Activated B cell treated with CpG ODN at 0.5 μM for 24 hours (primary cell): ENCODE measurements at regions of chr1 and their contacts with region 1.

Region 1: DNA sequence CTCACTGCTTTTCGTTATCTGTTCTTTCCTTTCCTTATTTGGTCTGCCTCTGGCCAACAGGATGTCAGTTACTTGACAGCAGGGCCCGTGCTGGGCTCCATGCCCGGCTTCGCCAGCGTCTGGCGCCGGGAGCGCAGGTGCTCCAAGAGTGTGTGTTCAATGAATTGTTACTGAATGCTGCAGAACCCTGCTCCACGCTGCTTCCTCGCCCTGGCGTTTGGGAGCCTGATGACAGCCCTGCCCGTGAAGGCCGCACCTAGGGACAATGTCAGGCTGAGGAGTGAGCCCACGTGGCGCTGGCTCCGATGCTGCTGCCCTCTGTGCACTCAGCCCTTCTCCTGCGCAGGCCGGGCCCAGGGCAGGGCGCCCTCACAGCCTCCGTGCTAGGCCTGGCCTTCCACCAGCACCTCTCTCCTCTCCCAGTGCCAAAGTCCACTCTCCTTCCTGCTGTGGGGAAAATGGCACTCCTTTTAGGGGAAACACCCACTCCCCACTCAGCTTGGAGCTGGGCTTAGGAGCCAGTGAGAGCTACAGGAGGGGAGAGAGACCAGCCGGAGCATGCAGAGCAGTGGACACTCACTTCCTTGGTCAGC is 51.4 kb downstream of the ACBD3 start:
- DNase-seq: no peak
- ATAC-seq: no peak
- H3K4me3 Mint-ChIP-seq: no peak overlapping the region
- H3K27ac Mint-ChIP-seq: peak overlapping the region; percentile 96
- H3K4me1 Mint-ChIP-seq: peaks cover 54% of the 10 kb centered on the region
- H3K27me3 Mint-ChIP-seq: no peaks in the 10 kb centered on the region
- CTCF ChIP-seq: no peak

Region 2: GRCh38 chr1:226149806-226150205 is 14.7 kb after region 1 on chr1:
- CTCF ChIA-PET with region 1: interaction called, 4 read pairs
- POLR2A ChIA-PET with region 1: interaction called, 10 read pairs
- intact Hi-C with region 1: loop called (anchors 2 kb)
- DNase-seq: no peak
- ATAC-seq: peak; percentile 49
- H3K4me3 Mint-ChIP-seq: no peak overlapping the region
- H3K27ac Mint-ChIP-seq: peak overlapping the region; percentile 30
- H3K4me1 Mint-ChIP-seq: peaks cover 44% of the 10 kb centered on the region
- H3K27me3 Mint-ChIP-seq: no peaks in the 10 kb centered on the region
- CTCF ChIP-seq: no peak

Region 3: DNA sequence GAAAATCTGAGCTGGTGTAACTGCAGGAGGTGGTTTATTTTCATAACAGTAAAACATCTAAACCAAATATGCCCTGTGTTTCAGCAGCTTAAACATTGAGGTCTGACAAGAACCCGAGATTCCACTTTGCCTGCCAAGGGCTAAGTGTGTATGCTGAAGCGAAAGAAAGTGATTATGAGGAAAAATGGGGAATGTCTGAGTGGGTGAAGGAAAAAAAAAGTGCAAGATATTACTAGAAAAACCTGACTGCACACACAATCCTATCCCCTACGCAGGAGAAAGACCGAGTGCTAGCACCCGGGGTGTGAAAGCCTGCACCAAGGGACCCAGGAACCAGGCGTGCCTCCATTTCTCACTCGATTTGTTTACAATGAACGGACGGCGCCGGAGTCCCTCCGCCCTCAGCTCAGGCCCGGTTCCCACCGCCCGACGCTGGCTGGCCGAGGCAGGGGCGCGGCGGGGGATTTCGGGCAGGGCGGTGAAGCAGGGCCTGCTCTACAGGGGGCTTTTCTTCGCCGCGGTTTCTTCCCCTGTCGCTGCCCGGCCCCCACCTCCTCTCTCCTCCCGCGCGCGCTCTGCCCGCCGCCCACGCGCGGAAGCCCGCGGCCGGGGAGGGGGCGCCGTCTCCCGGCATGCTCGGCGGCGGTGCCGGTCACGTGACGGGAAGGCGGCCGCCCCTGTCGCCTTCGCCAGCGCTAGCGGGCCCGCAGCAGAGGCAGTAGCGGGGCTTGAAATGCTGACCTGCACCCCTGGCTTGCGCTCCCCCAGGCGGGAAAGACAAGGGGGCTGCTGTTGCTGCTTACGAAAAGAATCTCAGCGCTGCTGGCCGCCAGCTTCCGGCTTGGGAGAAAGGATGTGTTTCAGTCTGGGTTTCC is 568.0 kb after region 1 on chr1:
- CTCF ChIA-PET with region 1: no interaction called
- POLR2A ChIA-PET with region 1: interaction called, 12 read pairs
- intact Hi-C with region 1: no loop called
- DNase-seq: peak; percentile 90
- ATAC-seq: peak; percentile 90
- H3K4me3 Mint-ChIP-seq: peak overlapping the region; percentile 76
- H3K27ac Mint-ChIP-seq: peak overlapping the region; percentile 93
- H3K4me1 Mint-ChIP-seq: peaks cover 78% of the 10 kb centered on the region
- H3K27me3 Mint-ChIP-seq: no peaks in the 10 kb centered on the region
- CTCF ChIP-seq: no peak